Activated T-helper 1 cell treated with anti-CD3 and anti-CD28 coated beads, Interleukin-12 subunit alpha, Interleukin-12 subunit beta, Interleukin-2, Interleukin-4 antibody, amounts not matched to agents 30 ng/mL and 10 ng/mL and 1 ng/mL, durations not matched to agents 14 hours and 24 hours and 36 hours (primary cell): ENCODE measurements at regions of chr1 and their contacts with region 1.

Region 1: DNA sequence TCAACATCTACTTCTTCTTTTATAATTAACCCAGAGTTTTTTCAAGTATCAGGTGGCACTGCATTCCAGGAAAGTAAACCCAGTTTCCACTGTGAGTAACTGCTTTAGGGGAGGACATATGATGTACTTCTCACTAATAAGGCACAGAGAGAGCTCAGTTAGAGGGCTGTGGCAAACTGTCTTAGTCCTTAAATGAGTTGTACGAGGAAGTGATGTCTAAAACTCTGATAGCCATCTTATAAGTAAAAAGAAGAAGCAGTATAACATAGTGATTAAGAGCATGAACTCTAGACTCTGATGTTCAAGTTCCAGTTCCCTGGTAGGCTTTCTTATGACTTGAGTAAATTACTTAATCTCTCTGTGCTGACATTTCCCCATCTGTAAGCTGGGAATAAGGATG is 58.7 kb upstream of the PTGS2 start:
- DNase-seq: peak; percentile 6
- H3K4me3 Mint-ChIP-seq: peak overlapping the region; percentile 23
- H3K27ac Mint-ChIP-seq: peak overlapping the region; percentile 61
- H3K4me1 Mint-ChIP-seq: peaks cover 30% of the 10 kb centered on the region
- H3K27me3 Mint-ChIP-seq: peaks cover 2% of the 10 kb centered on the region

Region 2: DNA sequence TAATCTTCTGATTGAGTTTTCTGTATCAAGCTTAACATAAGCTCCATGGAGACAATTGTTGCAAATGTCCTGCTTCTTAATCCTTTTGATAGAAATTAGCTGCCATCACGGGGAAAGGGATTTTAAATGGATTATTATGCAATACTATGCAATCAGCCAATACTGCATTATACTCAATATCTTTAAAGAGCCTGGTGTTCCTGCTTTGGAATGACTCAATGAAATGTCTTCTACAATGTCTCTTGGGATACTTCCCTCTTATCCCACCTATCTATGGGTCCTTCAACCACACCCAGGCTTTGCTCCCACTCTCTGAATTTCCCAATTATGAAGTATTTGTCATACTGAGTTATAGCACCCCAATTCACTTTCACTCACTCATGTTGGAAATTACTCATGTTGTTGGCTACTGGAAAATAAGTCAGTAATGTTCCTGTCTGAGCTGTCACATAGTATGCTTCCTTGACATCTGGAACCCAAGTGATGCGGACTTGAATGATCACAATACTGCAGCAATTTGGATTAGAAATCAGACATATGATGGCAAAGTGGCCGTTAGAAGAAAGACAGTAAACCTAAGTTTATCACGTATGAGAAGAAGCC is 448.9 kb before region 1 on chr1:
- intact Hi-C with region 1: loop called (anchors 5 kb)
- DNase-seq: no peak
- H3K4me3 Mint-ChIP-seq: peak overlapping the region; percentile 59
- H3K27ac Mint-ChIP-seq: peak overlapping the region; percentile 91
- H3K4me1 Mint-ChIP-seq: peaks cover 82% of the 10 kb centered on the region
- H3K27me3 Mint-ChIP-seq: no peaks in the 10 kb centered on the region

Region 3: DNA sequence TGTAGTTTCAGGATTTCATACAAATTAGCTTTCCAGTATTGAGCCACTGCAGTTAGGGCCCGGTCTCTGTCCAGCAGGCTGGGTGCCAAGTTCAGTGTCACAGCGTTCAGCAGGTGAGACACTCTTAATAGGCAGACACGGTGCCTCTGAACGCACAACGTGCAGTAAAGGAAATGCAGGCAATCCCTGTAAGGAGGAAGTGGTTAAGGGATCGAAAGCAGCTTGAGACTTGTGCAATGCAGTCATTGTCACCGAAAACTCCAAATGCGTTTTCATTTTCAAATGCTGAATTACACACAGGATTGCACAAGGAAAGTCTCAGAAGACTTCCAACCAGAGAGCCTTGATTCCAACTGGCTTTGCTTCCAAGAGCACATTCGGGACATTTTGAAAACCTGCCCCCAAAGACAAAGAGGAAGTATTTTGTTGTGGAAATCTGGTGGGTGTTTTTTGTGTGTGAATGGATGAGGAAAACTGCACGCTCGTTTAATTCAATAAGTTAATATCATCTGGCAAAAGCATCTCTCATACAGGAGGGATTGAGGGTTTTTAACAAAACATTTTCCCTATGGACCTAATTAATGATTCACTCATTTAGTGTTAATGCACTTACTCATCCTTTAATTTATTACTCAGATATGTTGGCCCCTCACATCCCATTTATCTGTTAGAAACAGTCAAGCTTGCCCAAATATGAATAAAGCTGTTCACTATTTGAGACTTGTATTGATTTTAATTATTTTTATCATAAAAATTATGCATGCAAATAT is 120.3 kb before region 1 on chr1:
- intact Hi-C with region 1: loop called (anchors 1 kb)
- DNase-seq: peak; percentile 50
- H3K4me3 Mint-ChIP-seq: peak overlapping the region; percentile 72
- H3K27ac Mint-ChIP-seq: no peak overlapping the region
- H3K4me1 Mint-ChIP-seq: peaks cover 50% of the 10 kb centered on the region
- H3K27me3 Mint-ChIP-seq: peaks cover 32% of the 10 kb centered on the region

Region 4: GRCh38 chr1:186680245-186681061 is 58.5 kb before region 1 on chr1 and contains the start of gene PTGS2:
- intact Hi-C with region 1: loop called (anchors 5 kb)
- DNase-seq: peak; percentile 21
- H3K4me3 Mint-ChIP-seq: peak within 1 kb of the TSS; percentile 72
- H3K27ac Mint-ChIP-seq: no peak within 1 kb of the TSS
- H3K4me1 Mint-ChIP-seq: peaks cover 13% of the 10 kb centered on the region
- H3K27me3 Mint-ChIP-seq: peaks cover 56% of the 10 kb centered on the region
- total RNA-seq, gene PTGS2: 0.67 and 0.71 TPM in 2 replicates

Region 5: GRCh38 chr1:186763107-186763506 is 24.2 kb after region 1 on chr1:
- intact Hi-C with region 1: loop called (anchors 1 kb)
- DNase-seq: no peak
- H3K4me3 Mint-ChIP-seq: no peak overlapping the region
- H3K27ac Mint-ChIP-seq: no peak overlapping the region
- H3K4me1 Mint-ChIP-seq: no peaks in the 10 kb centered on the region
- H3K27me3 Mint-ChIP-seq: no peaks in the 10 kb centered on the region